Stomach (tissue), 19 donors: ENCODE measurements at regions of chr17 and their contacts with region 1.

Region 1: DNA sequence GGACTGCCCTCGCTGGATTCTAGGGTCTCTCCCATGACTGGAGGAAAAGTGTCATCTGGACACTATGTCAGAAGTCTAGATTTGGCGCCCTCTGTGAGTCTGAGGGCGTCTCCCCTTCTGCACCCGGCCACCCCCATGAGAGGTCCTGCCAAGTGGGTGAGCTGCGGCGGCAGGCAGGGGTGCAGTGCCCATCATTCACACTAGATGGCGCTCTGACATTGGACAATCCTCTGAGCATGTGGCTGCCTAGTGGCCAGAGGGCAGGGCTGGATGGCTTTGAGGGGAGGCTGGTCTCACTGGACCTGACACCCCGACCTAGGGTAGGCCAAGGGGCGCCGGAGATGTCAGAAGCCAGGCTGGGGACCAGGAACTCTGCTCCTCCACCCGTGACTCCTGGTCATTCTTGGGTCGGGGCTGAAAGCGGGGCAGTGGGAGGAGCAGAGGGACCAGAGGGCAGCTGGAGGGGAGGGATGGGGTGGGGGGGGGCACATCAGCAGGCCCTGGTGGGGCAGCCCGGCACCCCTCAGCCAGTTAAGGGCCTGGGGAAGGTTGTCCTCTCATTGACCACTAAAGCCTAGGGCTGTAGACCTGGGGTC is 28.0 kb downstream of the MRM1 start:
- DNase-seq: peak; percentile 79 to 91
- H3K4me3 ChIP-seq: no peak overlapping the region
- H3K27ac ChIP-seq: no peak overlapping the region
- H3K4me1 ChIP-seq: peaks cover 0 to 7% (median 5%) of the 10 kb centered on the region in 4 donors
- H3K27me3 ChIP-seq: peaks cover 0 to 51% (median 5%) of the 10 kb centered on the region in 3 donors
- CTCF ChIP-seq: peak in 6 of 7 experiments; percentile 42 to 99 (median 98)
- EP300 ChIP-seq: no peak
- POLR2A ChIP-seq: no peak

Region 2: DNA sequence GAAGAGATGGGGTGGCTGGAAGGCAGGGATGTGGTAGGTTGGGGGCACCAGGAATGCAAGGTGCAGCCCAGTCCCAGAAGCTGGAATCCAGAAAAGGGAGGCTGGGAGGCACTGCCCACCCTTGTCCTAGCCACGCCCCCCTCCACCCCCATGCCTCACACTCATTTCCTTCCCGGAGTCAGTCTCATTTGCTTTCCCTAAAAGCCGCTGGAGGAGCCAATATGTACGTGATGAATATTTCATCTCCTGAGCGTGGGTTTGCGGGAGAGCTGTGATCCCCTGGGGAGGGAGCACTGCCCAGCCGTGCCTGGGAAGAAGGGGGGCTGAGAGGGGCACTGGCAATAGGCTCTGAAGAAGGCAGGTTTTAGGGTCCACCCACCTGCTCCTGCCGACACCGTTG is 183.4 kb after region 1 on chr17:
- intact Hi-C with region 1: no loop called
- DNase-seq: no peak
- H3K4me3 ChIP-seq: no peak overlapping the region
- H3K27ac ChIP-seq: no peak overlapping the region
- H3K4me1 ChIP-seq: peaks cover 5 to 10% (median 9%) of the 10 kb centered on the region in 4 donors
- H3K27me3 ChIP-seq: peaks cover 8 to 100% (median 75%) of the 10 kb centered on the region in 3 donors
- CTCF ChIP-seq: no peak
- EP300 ChIP-seq: no peak
- POLR2A ChIP-seq: no peak

Region 3: GRCh38 chr17:37050920-37051319 is 421.6 kb after region 1 on chr17:
- intact Hi-C with region 1: loop called (anchors 5 kb)
- DNase-seq: no peak
- H3K4me3 ChIP-seq: no peak overlapping the region
- H3K27ac ChIP-seq: no peak overlapping the region
- H3K4me1 ChIP-seq: peaks cover 0 to 12% (median 5%) of the 10 kb centered on the region in 4 donors
- H3K27me3 ChIP-seq: no peaks in the 10 kb centered on the region
- CTCF ChIP-seq: no peak
- EP300 ChIP-seq: no peak
- POLR2A ChIP-seq: no peak

Region 4: GRCh38 chr17:37239690-37240334 is 610.5 kb after region 1 on chr17:
- intact Hi-C with region 1: loop called (anchors 10 kb)
- DNase-seq: peak in 1 of 2 donors; percentile 51
- H3K4me3 ChIP-seq: no peak overlapping the region
- H3K27ac ChIP-seq: no peak overlapping the region
- H3K4me1 ChIP-seq: no peaks in the 10 kb centered on the region
- H3K27me3 ChIP-seq: no peaks in the 10 kb centered on the region
- CTCF ChIP-seq: peak in 5 of 7 experiments; percentile 19 to 55 (median 40)
- EP300 ChIP-seq: no peak
- POLR2A ChIP-seq: no peak